Gastrocnemius medialis (tissue), 4 donors: ENCODE measurements at regions of chr2 and their contacts with region 1.

Region 1: GRCh38 chr2:179340668-179341067 is 76.0 kb upstream of the SESTD1 start:
- DNase-seq: no peak
- ATAC-seq: peak in 1 of 2 donors; percentile 35
- H3K4me3 ChIP-seq: no peak overlapping the region
- H3K27ac ChIP-seq: no peak overlapping the region
- H3K4me1 ChIP-seq: peaks cover 12% of the 10 kb centered on the region in 2 donors
- H3K27me3 ChIP-seq: no peaks in the 10 kb centered on the region
- CTCF ChIP-seq: no peak
- POLR2A ChIP-seq: no peak

Region 2: DNA sequence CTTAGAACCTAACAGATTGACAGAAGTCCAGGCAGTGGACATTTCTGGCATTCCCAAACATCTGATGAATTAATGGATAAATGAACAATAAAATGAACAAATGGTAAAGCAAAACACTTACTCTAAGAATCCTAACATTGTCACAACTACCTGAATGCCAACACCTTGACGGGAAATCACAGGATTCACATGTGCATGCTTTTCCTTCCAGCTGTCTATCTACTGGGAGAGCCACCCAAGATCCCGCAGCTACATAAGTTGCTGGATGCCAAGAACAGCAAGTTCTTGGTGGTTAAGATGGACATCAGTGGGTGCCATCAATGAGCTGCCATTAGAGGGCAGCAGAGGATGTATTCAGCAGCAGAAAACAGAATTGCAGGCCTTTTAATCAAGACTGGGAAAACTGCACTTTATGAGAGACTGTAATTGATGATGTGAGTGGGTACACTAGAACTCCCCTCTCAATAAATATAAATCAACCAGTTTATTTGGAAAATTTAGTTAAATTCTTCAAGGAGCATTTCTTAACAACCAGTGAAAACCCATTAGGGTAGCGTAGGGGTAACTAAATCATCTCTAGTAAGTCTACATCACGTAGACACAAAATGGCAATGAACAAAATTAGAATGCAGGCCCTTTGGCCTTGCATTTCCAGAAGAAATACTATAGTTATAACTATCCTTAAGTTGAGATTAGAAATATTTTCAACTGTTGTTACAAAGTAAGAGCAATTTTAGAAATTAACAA is 121.6 kb before region 1 on chr2:
- in situ Hi-C with region 1: loop called in 1 of 4 experiments (anchors 25 kb)
- intact Hi-C with region 1: no loop called
- DNase-seq: peak; percentile 53 to 74
- ATAC-seq: peak; percentile 97 to 98
- H3K4me3 ChIP-seq: no peak overlapping the region
- H3K27ac ChIP-seq: peak overlapping the region in 2 of 4 donors; percentile 5 to 17
- H3K4me1 ChIP-seq: peaks cover 5 to 12% of the 10 kb centered on the region in 2 donors
- H3K27me3 ChIP-seq: no peaks in the 10 kb centered on the region
- CTCF ChIP-seq: peak; percentile 65 to 88 (median 69)
- POLR2A ChIP-seq: no peak

Region 3: GRCh38 chr2:179264368-179265081 is 76.1 kb before region 1 on chr2 and contains the start of gene SESTD1:
- in situ Hi-C with region 1: loop called in 1 of 4 experiments (anchors 10 kb)
- intact Hi-C with region 1: no loop called
- DNase-seq: peak; percentile 35 to 45
- ATAC-seq: peak; percentile 69 to 74
- H3K4me3 ChIP-seq: peak within 1 kb of the TSS; percentile 77 to 94 (median 88)
- H3K27ac ChIP-seq: peak within 1 kb of the TSS; percentile 78 to 82 (median 80)
- H3K4me1 ChIP-seq: peaks cover 7 to 22% of the 10 kb centered on the region in 2 donors
- H3K27me3 ChIP-seq: no peaks in the 10 kb centered on the region
- CTCF ChIP-seq: peak in 1 of 5 experiments; percentile 30
- POLR2A ChIP-seq: peak; percentile 75 to 78
- total RNA-seq, gene SESTD1: 4.1 to 11.0 (median 8.6) TPM

Region 4: GRCh38 chr2:179272406-179273192 is 68.1 kb before region 1 on chr2:
- in situ Hi-C with region 1: loop called in 1 of 4 experiments (anchors 10 kb)
- intact Hi-C with region 1: loop called (anchors 5 kb)
- DNase-seq: no peak
- ATAC-seq: peak; percentile 76 to 82
- H3K4me3 ChIP-seq: no peak overlapping the region
- H3K27ac ChIP-seq: peak overlapping the region; percentile 44 to 67 (median 56)
- H3K4me1 ChIP-seq: peaks cover 5 to 13% of the 10 kb centered on the region in 2 donors
- H3K27me3 ChIP-seq: no peaks in the 10 kb centered on the region
- CTCF ChIP-seq: no peak
- POLR2A ChIP-seq: no peak